HepG2 (cell line): ENCODE measurements at regions of chr22 and their contacts with region 1.

Region 1: GRCh38 chr22:50620593-50621355 is 7.2 kb downstream of the ARSA start:
- DNase-seq: peak; percentile 25
- ATAC-seq: peak; percentile 67
- H3K4me3 ChIP-seq: peak overlapping the region; percentile 46 to 61 (median 47)
- H3K27ac ChIP-seq: no peak overlapping the region
- H3K4me1 ChIP-seq: peaks cover 54% of the 10 kb centered on the region
- H3K27me3 ChIP-seq: no peaks in the 10 kb centered on the region
- CTCF ChIP-seq: peak; percentile 82
- EP300 ChIP-seq: no peak
- POLR2A ChIP-seq: no peak
- RAD21 ChIP-seq: no peak

Region 2: DNA sequence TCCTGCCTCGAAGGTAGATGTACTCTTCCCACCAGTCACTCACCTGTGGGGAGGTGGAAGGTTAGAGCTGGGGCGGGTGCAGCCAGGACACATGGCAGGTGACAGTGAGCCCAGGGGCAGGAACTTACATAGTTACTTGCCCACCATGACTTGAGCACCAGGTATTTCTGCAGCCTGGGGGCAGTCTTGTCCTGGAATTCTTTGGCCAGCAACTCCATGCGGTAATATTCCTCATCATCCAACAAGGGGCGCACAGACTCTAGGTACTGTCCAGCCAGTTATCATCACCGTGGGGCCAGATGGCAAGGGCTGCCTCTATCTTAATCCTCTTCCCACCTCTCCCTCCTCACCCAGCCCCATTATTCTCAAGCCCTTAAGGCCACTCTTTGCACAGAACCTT is 44.7 kb before region 1 on chr22:
- CTCF ChIA-PET with region 1: interaction called, 37 read pairs
- POLR2A ChIA-PET with region 1: no interaction called
- in situ Hi-C with region 1: no loop called
- intact Hi-C with region 1: loop called (anchors 1 kb)
- DNase-seq: peak; percentile 81
- ATAC-seq: peak; percentile 83
- H3K4me3 ChIP-seq: no peak overlapping the region
- H3K27ac ChIP-seq: no peak overlapping the region
- H3K4me1 ChIP-seq: peaks cover 2% of the 10 kb centered on the region
- H3K27me3 ChIP-seq: no peaks in the 10 kb centered on the region
- CTCF ChIP-seq: peak; percentile 81
- EP300 ChIP-seq: no peak
- POLR2A ChIP-seq: no peak
- RAD21 ChIP-seq: peak; percentile 94

Region 3: GRCh38 chr22:50696797-50697561 is 76.2 kb after region 1 on chr22:
- CTCF ChIA-PET with region 1: interaction called, 12 read pairs
- POLR2A ChIA-PET with region 1: interaction called, 14 read pairs
- in situ Hi-C with region 1: loop called (anchors 5 kb)
- intact Hi-C with region 1: loop called (anchors 2 kb)
- DNase-seq: no peak
- ATAC-seq: no peak
- H3K4me3 ChIP-seq: peak overlapping the region in 2 of 3 experiments; percentile 82 to 89; a peak in 3 of 6 replicates
- H3K27ac ChIP-seq: no peak overlapping the region
- H3K4me1 ChIP-seq: peaks cover 42% of the 10 kb centered on the region
- H3K27me3 ChIP-seq: no peaks in the 10 kb centered on the region
- CTCF ChIP-seq: no peak
- EP300 ChIP-seq: no peak
- POLR2A ChIP-seq: no peak
- RAD21 ChIP-seq: no peak